Right ventricle myocardium inferior (tissue), 1 donor: ENCODE measurements at regions of chr1 and their contacts with region 1.

Region 1: DNA sequence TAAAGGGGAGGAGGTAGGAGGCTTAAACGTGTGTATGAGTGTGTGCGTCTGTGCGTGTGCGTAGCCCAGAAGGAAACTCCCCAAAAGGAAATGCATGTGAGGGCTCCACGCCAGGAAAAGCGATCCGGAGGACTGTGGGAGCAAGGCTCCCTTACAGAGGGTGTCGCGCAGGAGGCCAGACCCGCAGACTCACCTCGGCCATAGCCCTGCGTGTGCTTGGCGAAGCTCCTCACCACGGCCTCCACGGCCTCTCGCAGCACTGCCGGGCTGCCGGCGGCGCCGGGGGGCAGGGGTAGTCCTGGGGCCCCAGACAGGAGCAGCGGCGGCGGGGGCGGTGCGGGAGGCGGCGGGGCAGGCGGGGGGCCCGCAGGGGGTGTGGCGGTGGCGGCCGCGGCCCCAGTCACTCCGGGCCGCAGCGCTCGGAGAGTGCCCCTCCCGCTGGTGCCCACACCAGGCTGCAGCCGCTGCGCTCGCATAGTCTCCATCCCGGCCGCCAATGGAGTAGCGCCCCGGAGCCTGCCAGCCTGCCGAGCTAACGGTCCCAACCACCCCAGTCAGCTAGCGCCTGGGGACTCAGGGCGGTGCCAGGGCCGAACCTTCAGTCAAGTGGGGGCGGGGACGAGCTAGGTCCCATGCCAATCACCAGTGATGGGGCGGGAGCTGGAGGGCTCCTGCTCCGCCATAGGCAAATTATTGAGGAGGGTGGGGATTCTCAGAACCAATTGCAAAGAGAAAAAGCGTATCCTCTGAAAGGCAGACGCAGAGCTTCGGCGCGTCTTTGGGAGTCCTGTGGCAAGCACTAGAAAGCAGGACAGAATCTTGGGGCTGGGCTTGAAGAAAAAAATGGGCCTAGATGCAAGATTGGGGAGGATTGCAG is at the start of gene LIX1L:
- DNase-seq: peak; percentile 97
- ATAC-seq: peak; percentile 89
- total RNA-seq, gene LIX1L: 25.8 TPM

Region 2: DNA sequence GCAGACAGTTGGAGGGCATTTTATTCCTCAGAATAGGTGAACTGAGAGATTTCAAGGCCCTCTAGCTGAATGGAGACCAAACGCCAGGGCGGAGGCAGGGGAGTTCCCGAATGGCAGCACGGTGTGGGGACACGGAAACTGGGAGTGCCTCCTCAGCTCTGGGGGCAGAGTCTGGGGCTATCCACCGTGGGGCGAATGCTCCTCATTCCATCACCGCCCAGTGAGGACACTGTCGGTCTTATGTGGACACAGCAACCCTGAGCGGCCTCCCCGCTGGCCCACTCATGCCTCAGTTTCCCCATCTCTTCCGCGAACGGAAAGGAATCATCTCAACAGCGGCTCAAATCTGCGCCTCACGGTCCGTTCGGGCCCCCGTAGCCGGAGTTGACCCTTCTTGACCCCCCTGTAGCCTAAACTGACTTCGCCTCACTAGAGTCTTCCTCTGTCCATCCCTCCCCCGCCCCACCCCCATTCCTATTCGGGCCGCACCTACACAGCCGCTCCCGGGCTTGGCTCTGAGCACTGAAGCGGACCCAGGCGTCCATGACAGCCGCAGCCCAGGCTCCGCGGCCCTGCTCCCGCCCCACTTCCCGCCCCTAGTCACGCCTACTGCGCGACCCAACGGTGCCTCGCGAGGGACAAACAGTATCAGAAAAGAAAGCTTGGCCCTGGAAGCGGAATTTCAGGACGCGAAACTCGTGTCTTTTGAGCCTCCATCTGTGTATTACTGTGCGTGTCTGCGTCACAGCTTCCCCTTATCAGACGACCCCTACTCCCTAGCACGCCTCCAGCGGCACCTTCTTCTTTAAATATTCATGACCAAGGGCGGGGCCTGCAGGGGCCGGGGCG is 39.3 kb before region 1 on chr1 and contains the start of gene PEX11B:
- intact Hi-C with region 1: loop called (anchors 5 kb)
- DNase-seq: peak; percentile 96
- ATAC-seq: peak; percentile 95
- total RNA-seq, gene PEX11B: 19.2 TPM

Region 3: DNA sequence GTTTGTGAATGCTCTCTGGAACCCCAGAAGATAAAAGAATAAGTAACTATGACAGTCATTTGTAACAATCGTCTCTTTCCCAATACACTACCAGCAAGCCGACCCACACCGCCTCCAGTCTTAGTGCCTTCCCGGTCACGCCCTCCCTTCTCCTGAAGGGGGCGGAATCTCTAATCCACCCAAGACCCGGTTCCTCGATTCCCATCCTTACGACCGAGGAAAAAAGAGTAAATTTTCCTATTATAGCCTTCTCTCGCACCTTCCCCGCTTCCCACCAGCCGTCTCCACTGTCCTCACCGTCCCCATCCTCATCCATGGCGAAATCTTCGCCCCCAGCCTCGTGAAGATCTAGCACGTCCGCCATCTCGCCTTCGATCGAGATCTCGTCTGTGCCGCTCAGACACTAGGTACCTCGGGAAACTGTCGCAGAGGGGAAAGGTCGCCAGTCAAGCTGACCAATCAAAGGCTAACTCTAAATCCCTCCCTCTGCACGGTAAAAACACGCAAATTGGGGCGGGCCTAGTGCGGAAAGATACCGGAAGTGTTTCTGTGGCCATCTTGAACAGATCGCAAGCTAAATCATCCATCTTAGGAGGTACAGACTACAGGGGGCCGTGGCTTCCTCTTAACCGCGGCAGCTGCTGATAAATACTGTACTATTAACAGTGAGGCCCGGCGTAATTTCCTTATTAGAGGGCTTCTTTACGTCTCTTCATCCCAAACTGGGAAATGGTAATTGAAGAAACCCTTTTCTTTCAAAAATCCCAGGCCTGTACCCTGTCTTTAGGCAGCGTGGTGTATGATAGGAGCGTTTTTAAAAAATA is 30.4 kb before region 1 on chr1 and contains the start of gene RBM8A:
- intact Hi-C with region 1: loop called (anchors 1 kb)
- DNase-seq: peak; percentile 94
- ATAC-seq: peak; percentile 99
- total RNA-seq, gene RBM8A: 63.6 TPM

Region 4: DNA sequence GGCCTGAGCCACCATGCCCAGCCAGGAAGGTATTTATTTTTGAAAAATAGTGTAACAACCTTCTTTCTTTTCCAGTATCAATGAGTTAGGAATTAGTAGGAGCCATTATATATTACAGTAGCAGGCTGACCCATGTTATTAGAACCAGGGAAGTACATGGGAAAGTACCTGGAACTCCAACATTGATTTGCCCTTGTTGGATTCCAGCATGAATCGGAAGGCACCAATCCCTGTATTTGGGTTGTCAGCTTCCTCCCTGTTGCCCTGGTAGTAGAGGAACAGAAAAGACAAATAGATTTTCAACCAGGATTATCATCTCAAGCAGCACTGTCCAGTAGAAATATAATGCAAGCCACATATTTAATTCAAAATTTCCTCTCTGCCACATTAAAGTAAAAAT is 20.2 kb before region 1 on chr1:
- intact Hi-C with region 1: no loop called
- DNase-seq: no peak
- ATAC-seq: no peak